ENCODE measurements at regions of chr5 and their contacts with region 1.

Region 1: GRCh38 chr5:74673011-74673790 is 11.8 kb upstream of the HEXB start:
- DNase-seq: peak in 1 of 2 experiments; percentile 50
- ATAC-seq: peak; percentile 70 to 81; a peak in 4 of 6 replicates
- H3K4me3 ChIP-seq: no peak overlapping the region
- H3K27ac ChIP-seq: no peak overlapping the region
- H3K4me1 ChIP-seq: 0 out of 3 replicates have a peak, but pooled peaks cover 6% of the 10 kb centered on the region
- CTCF ChIP-seq: peak; percentile 77
- EP300 ChIP-seq: no peak
- POLR2A ChIP-seq: no peak
- RAD21 ChIP-seq: peak; percentile 80 to 84

Region 2: DNA sequence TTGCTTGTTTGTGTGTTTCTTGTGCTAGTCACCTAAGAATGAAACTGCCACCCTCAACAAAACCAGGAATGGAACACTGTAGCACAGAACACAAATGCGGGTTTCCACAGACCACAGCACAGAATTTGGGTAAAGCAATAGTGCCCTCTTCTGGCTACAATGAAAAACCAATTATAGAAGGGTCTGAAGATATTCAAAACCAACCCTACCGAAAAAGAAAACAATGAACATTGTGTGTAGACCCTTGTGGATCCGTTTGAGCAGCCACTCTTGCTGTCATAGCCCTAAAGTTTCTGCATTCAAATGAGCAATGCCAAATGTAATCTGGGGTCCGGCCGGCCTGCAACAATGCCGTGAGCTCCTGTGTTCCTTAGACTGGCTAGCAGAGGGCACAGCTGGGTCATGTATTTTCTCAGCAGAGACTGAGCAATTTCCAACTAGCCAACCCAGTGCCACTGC is 24.3 kb before region 1 on chr5:
- CTCF ChIA-PET with region 1: no interaction called
- POLR2A ChIA-PET with region 1: no interaction called
- DNase-seq: peak; percentile 65 to 77
- ATAC-seq: peak; percentile 88 to 96
- H3K4me3 ChIP-seq: no peak overlapping the region
- H3K27ac ChIP-seq: peak overlapping the region in 1 of 2 experiments; percentile 43; a peak in 3 of 6 replicates
- H3K4me1 ChIP-seq: peaks cover 16% of the 10 kb centered on the region
- CTCF ChIP-seq: peak; percentile 95
- EP300 ChIP-seq: no peak
- POLR2A ChIP-seq: no peak
- RAD21 ChIP-seq: peak; percentile 95 to 97

Region 3: GRCh38 chr5:74660140-74660539 is 13.1 kb before region 1 on chr5:
- CTCF ChIA-PET with region 1: interaction called, 20 read pairs
- POLR2A ChIA-PET with region 1: no interaction called
- DNase-seq: no peak
- ATAC-seq: no peak
- H3K4me3 ChIP-seq: no peak overlapping the region
- H3K27ac ChIP-seq: no peak overlapping the region
- H3K4me1 ChIP-seq: no peaks in the 10 kb centered on the region
- CTCF ChIP-seq: no peak
- EP300 ChIP-seq: no peak
- POLR2A ChIP-seq: no peak
- RAD21 ChIP-seq: no peak

Region 4: DNA sequence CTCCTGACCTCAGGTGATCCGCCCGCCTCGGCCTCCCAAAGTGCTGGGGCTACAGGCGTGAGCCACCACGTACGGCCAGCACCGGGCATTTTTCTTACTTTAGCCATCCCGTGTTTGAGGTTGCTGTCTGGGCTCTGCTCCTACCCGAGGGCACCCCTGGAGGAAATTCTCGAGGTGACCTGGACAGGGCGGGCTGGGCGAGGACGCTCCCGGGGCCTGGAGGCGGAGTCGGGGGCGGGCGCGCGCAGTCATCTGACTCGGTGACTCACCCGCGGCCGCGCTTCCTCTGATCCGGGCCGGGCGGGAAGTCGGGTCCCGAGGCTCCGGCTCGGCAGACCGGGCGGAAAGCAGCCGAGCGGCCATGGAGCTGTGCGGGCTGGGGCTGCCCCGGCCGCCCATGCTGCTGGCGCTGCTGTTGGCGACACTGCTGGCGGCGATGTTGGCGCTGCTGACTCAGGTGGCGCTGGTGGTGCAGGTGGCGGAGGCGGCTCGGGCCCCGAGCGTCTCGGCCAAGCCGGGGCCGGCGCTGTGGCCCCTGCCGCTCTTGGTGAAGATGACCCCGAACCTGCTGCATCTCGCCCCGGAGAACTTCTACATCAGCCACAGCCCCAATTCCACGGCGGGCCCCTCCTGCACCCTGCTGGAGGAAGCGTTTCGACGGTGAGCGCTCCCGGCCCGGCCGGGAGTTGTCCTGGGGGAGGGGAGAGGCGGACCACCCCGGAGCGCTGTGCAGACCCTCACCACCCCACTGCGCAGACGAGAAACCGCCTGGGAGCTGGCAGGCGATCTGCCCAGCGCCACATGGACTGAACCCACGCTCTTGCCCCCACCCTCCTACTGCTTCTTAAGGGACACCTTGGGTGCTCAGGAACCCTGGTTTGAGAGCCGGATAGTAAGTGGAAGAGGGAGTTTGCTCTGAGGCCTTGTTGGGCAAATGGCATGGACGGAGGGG is 12.0 kb after region 1 on chr5 and contains the start of gene HEXB:
- CTCF ChIA-PET with region 1: interaction called, 20 read pairs
- POLR2A ChIA-PET with region 1: interaction called, 3 read pairs
- DNase-seq: peak; percentile 82 to 87
- ATAC-seq: peak; percentile 97 to 99
- H3K4me3 ChIP-seq: peak within 1 kb of the TSS; percentile 89
- H3K27ac ChIP-seq: peak within 1 kb of the TSS; percentile 84 to 100
- H3K4me1 ChIP-seq: peaks cover 12% of the 10 kb centered on the region; the same call in 2 of the 3 replicates
- CTCF ChIP-seq: no peak
- EP300 ChIP-seq: no peak
- POLR2A ChIP-seq: peak; percentile 88
- RAD21 ChIP-seq: no peak
- polyA plus RNA-seq, gene HEXB: 111 and 153 TPM in 2 replicates

Region 5: GRCh38 chr5:74786867-74787266 is 113.7 kb after region 1 on chr5:
- CTCF ChIA-PET with region 1: no interaction called
- POLR2A ChIA-PET with region 1: no interaction called
- DNase-seq: no peak
- ATAC-seq: no peak
- H3K4me3 ChIP-seq: no peak overlapping the region
- H3K27ac ChIP-seq: no peak overlapping the region
- H3K4me1 ChIP-seq: no peaks in the 10 kb centered on the region
- CTCF ChIP-seq: no peak
- EP300 ChIP-seq: no peak
- POLR2A ChIP-seq: no peak
- RAD21 ChIP-seq: no peak

Region 6: DNA sequence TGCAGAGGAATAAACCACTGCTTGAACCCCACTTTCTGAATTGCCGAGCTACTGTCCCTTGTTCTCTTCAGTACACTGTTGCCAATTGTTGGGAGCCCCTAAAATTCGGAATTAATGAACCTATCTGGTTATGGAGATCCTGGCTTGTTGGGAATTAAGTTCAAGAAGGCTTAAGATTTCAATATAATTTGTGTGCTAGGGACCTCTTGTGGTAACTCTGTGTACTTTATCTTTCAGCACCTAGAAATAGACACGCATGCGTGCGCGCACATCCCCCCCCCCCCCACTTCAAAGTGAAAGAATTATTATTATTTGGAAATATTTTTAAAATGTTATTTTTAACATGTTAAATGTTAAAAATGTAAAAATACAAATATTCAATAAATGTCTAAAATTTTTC is 246.3 kb after region 1 on chr5:
- CTCF ChIA-PET with region 1: interaction called, 117 read pairs
- POLR2A ChIA-PET with region 1: no interaction called
- DNase-seq: peak; percentile 51 to 65
- ATAC-seq: peak in 1 of 2 experiments; percentile 66; a peak in 3 of 6 replicates
- H3K4me3 ChIP-seq: no peak overlapping the region
- H3K27ac ChIP-seq: no peak overlapping the region
- H3K4me1 ChIP-seq: peaks cover 17% of the 10 kb centered on the region
- CTCF ChIP-seq: peak; percentile 80
- EP300 ChIP-seq: no peak
- POLR2A ChIP-seq: no peak
- RAD21 ChIP-seq: peak; percentile 74 to 85

Region 7: DNA sequence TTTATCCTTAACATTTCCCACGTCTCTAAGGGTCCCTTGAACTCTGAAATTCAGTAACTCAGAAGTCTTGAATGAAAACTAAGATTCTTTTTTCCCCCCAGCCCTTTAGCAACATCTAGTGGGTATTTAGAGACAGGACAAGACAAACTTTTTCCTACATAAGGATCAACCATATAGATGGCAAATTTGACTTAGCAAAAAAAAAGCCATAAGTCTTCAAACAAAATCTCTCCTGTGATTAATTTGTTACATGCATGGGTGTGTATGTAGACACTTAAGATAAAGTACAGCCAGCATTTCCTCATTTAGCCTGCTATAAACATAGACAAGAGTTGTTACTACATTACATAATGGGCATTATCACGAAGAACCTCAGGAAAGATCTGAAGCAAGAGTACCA is 592.5 kb after region 1 on chr5:
- CTCF ChIA-PET with region 1: interaction called, 15 read pairs
- POLR2A ChIA-PET with region 1: no interaction called
- DNase-seq: peak; percentile 21 to 50
- ATAC-seq: peak; percentile 70 to 79; a peak in 5 of 6 replicates
- H3K4me3 ChIP-seq: no peak overlapping the region
- H3K27ac ChIP-seq: no peak overlapping the region
- H3K4me1 ChIP-seq: peaks cover 4% of the 10 kb centered on the region; the same call in 1 of the 3 replicates
- CTCF ChIP-seq: peak; percentile 70
- EP300 ChIP-seq: no peak
- POLR2A ChIP-seq: no peak
- RAD21 ChIP-seq: peak; percentile 78 to 81

Measured in A549 (cell line).